ENCODE measurements at regions of chr16 and their contacts with region 1.

Region 1: GRCh38 chr16:89217388-89218191 is at the start of gene ZNF778:
- DNase-seq: peak; percentile 89
- H3K4me3 ChIP-seq: peak within 1 kb of the TSS; percentile 80
- H3K27ac ChIP-seq: peak within 1 kb of the TSS; percentile 86
- H3K4me1 ChIP-seq: peaks cover 7% of the 10 kb centered on the region
- H3K27me3 ChIP-seq: no peaks in the 10 kb centered on the region
- CTCF ChIP-seq: no peak
- total RNA-seq, gene ZNF778: 11.8 and 14.0 TPM in 2 replicates

Region 2: GRCh38 chr16:88754912-88755744 is 462.5 kb before region 1 on chr16:
- CTCF ChIA-PET with region 1: no interaction called
- POLR2A ChIA-PET with region 1: no interaction called
- intact Hi-C with region 1: loop called (anchors 10 kb)
- DNase-seq: peak; percentile 56
- H3K4me3 ChIP-seq: no peak overlapping the region
- H3K27ac ChIP-seq: no peak overlapping the region
- H3K4me1 ChIP-seq: no peaks in the 10 kb centered on the region
- H3K27me3 ChIP-seq: no peaks in the 10 kb centered on the region
- CTCF ChIP-seq: peak; percentile 64

Region 3: DNA sequence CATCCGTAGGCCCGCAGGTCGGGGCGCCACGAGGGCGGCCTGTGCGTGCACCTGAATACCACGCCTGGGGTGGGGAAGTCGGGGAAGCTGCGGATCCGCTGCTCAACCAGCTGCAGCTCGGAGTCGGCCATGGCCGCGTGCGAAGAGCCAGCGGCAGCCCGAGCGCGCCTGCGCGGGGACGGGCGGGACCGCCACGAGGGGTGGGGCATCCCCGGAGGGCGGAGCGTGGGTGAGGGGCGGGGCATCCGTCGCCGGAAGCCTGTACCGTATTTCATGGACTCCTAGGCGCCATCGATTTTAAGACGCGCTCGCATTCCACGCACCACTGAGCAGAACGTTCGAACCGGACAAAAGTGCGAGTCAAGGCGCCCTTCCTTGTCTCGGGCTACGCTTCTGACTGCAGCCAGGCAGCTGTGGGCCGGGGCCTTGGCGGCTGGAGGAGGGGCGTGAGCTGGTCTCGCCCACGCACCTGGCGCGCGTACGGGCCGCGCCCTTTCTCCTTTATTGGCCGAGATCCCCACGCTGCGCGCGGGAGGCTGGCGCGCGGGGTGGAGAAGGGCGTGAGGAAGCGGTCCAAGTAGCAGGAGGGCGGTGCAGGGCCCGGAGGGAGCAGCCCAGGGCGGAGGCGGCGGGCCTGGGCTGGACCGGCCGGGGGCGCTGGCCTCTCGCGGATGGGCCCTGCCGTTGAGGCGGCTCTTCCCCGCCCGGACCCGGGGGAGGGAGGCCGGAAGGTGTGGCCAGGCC is 405.6 kb before region 1 on chr16 and contains the start of gene APRT:
- CTCF ChIA-PET with region 1: no interaction called
- POLR2A ChIA-PET with region 1: no interaction called
- intact Hi-C with region 1: loop called (anchors 1 kb)
- DNase-seq: peak; percentile 93
- H3K4me3 ChIP-seq: peak within 1 kb of the TSS; percentile 60
- H3K27ac ChIP-seq: peak within 1 kb of the TSS; percentile 94
- H3K4me1 ChIP-seq: peaks cover 7% of the 10 kb centered on the region
- H3K27me3 ChIP-seq: no peaks in the 10 kb centered on the region
- CTCF ChIP-seq: no peak
- total RNA-seq, gene APRT: 129 and 134 TPM in 2 replicates

Region 4: DNA sequence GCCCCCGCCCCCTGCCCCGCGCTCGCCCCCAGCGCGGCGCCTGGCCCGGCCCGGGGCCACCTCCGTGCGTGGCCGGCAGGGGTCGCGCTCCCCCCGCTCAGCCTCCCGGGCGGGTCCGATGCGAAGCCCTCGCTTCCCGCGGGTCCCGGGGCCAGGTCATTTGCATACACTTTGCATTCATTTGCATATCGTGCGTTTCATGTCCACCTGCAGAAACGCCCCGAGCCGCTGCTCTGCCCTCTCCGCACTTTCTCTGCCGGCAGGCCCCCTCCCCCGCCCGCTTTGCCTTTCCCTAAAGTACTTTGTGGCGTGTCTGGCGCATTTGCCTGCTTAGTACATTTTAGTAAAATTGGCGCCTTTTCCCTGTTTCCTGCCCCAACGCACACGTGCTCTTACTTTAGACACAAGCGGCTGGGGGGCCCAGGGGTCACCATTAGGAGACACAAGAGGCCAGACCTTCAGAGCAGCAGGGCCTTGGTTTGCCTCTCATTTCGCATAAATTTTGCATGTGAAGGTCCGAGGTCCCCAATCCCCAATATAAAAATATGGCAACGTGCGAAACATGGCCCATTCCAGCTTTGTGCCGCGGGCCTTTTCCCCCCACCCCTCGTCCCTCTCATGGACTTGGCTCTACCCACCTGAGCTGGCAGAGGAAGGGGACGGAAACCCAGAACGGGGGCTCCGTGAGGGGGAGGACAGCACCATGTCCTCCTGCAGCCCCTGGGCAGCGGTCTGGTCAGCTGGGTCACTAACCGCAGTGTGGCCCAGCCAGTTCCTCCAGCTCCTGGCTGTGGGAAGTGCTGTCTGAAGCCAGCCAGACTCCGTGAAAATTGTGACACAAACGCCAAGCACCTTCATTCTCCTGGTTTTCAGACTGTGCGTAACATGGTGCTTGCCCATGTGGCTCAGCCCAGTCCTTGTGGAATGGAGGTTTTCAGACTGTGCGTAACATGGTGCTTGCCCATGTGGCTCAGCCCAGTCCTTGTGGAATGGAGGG is 275.4 kb before region 1 on chr16:
- CTCF ChIA-PET with region 1: no interaction called
- POLR2A ChIA-PET with region 1: interaction called, 3 read pairs
- intact Hi-C with region 1: loop called (anchors 10 kb)
- DNase-seq: peak; percentile 71
- H3K4me3 ChIP-seq: peak overlapping the region; percentile 37
- H3K27ac ChIP-seq: no peak overlapping the region
- H3K4me1 ChIP-seq: peaks cover 17% of the 10 kb centered on the region
- H3K27me3 ChIP-seq: peaks cover 52% of the 10 kb centered on the region
- CTCF ChIP-seq: peak; percentile 54